Mammary epithelial cell (primary cell): ENCODE measurements at regions of chr2 and their contacts with region 1.

Region 1: GRCh38 chr2:108637304-108637669 is 82.0 kb upstream of the RANBP2 start:
- DNase-seq: peak; percentile 86
- H3K4me3 ChIP-seq: no peak overlapping the region
- H3K27ac ChIP-seq: peak overlapping the region; percentile 37
- H3K4me1 ChIP-seq: peaks cover 33% of the 10 kb centered on the region
- H3K27me3 ChIP-seq: no peaks in the 10 kb centered on the region
- CTCF ChIP-seq: no peak

Region 2: GRCh38 chr2:108215794-108216211 is 421.5 kb before region 1 on chr2:
- CTCF ChIA-PET with region 1: no interaction called
- dilution Hi-C with region 1: no loop called
- in situ Hi-C with region 1: no loop called
- intact Hi-C with region 1: loop called (anchors 5 kb)
- DNase-seq: peak; percentile 64
- H3K4me3 ChIP-seq: no peak overlapping the region
- H3K27ac ChIP-seq: no peak overlapping the region
- H3K4me1 ChIP-seq: peaks cover 3% of the 10 kb centered on the region
- H3K27me3 ChIP-seq: no peaks in the 10 kb centered on the region
- CTCF ChIP-seq: peak; percentile 33 to 59

Region 3: GRCh38 chr2:108351889-108352288 is 285.4 kb before region 1 on chr2:
- CTCF ChIA-PET with region 1: no interaction called
- dilution Hi-C with region 1: no loop called
- in situ Hi-C with region 1: no loop called
- intact Hi-C with region 1: loop called (anchors 1 kb)
- DNase-seq: no peak
- H3K4me3 ChIP-seq: no peak overlapping the region
- H3K27ac ChIP-seq: no peak overlapping the region
- H3K4me1 ChIP-seq: no peaks in the 10 kb centered on the region
- H3K27me3 ChIP-seq: no peaks in the 10 kb centered on the region
- CTCF ChIP-seq: no peak

Region 4: DNA sequence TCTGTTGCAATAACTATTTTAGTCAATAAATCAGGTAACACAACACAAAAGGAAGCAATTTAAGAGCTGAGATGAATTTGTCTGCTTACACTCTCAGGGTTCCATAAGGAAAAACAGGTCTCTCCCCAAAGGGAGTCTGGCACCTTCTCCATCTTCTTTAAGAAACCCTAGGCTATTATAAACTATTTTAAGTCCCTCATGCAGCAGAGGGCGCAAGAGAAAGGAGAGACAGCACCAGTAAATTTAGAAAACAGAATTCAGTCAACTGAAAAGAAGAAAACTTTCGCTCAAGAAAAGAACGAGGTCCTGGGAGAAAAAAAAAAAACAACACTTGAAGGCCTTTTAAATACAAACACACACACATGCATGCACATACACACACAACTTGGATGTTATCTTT is 240.4 kb before region 1 on chr2:
- CTCF ChIA-PET with region 1: interaction called, 6 read pairs
- dilution Hi-C with region 1: no loop called
- in situ Hi-C with region 1: no loop called
- intact Hi-C with region 1: loop called (anchors 2 kb)
- DNase-seq: peak; percentile 39
- H3K4me3 ChIP-seq: no peak overlapping the region
- H3K27ac ChIP-seq: no peak overlapping the region
- H3K4me1 ChIP-seq: no peaks in the 10 kb centered on the region
- H3K27me3 ChIP-seq: no peaks in the 10 kb centered on the region
- CTCF ChIP-seq: peak; percentile 28 to 59

Region 5: GRCh38 chr2:108533832-108534583 is 103.3 kb before region 1 on chr2 and contains the start of gene LIMS1:
- CTCF ChIA-PET with region 1: no interaction called
- dilution Hi-C with region 1: no loop called
- in situ Hi-C with region 1: no loop called
- intact Hi-C with region 1: loop called (anchors 10 kb)
- DNase-seq: peak; percentile 85
- H3K4me3 ChIP-seq: peak within 1 kb of the TSS; percentile 67 to 98 (median 94)
- H3K27ac ChIP-seq: peak within 1 kb of the TSS; percentile 97
- H3K4me1 ChIP-seq: peaks cover 33% of the 10 kb centered on the region
- H3K27me3 ChIP-seq: no peaks in the 10 kb centered on the region
- CTCF ChIP-seq: no peak
- total RNA-seq, gene LIMS1: 60.1 to 108 TPM

Region 6: DNA sequence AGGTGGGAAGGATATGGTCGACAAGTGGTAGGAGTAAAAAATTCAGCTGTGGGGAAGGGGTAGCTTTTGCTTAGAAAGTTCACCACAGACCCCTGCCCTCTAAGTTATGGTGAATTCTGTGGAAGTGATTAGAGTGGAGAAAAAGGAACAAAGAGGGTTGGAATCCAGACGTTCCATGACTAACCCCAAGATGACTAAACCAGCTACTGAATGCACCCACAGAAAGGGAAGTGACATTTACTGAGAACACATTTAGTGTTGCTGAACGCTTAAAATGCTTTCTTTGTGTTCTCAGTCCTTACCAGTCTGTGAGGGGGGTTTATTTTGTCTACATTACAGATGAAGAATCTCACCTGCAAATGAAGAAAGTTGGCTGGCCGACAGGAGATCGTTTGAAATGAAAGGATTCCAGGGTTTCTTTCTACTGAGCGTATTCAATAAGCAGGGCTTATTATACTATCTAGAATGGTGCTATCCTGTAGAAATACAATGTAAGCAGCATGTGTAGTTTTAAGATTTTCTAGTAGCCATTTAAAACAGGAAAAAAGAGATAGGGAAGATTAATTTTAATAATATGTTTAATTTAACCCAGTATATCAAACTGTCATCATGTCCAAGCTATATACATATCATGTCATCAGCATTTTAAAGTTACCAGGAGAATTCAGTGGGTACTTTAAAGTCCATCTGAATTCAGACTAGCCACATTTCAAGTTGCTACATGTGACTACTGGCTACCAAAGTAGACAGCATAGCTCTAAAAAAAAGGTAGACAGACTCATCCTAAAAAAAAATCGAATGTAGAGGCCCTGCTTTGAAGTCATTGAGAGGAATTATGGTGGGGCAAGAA is 42.9 kb before region 1 on chr2:
- CTCF ChIA-PET with region 1: interaction called, 5 read pairs
- dilution Hi-C with region 1: no loop called
- in situ Hi-C with region 1: no loop called
- intact Hi-C with region 1: loop called (anchors 1 kb)
- DNase-seq: peak; percentile 91
- H3K4me3 ChIP-seq: peak overlapping the region; percentile 22 to 38 (median 24)
- H3K27ac ChIP-seq: peak overlapping the region; percentile 98
- H3K4me1 ChIP-seq: peaks cover 44% of the 10 kb centered on the region
- H3K27me3 ChIP-seq: no peaks in the 10 kb centered on the region
- CTCF ChIP-seq: no peak

Region 7: GRCh38 chr2:108607706-108608301 is 29.5 kb before region 1 on chr2:
- CTCF ChIA-PET with region 1: no interaction called
- dilution Hi-C with region 1: no loop called
- in situ Hi-C with region 1: no loop called
- intact Hi-C with region 1: loop called (anchors 1 kb)
- DNase-seq: no peak
- H3K4me3 ChIP-seq: no peak overlapping the region
- H3K27ac ChIP-seq: no peak overlapping the region
- H3K4me1 ChIP-seq: peaks cover 18% of the 10 kb centered on the region
- H3K27me3 ChIP-seq: no peaks in the 10 kb centered on the region
- CTCF ChIP-seq: peak; percentile 50 to 68